CD4-positive, alpha-beta memory T cell (primary cell): ENCODE measurements at regions of chr1 and their contacts with region 1.

Region 1: DNA sequence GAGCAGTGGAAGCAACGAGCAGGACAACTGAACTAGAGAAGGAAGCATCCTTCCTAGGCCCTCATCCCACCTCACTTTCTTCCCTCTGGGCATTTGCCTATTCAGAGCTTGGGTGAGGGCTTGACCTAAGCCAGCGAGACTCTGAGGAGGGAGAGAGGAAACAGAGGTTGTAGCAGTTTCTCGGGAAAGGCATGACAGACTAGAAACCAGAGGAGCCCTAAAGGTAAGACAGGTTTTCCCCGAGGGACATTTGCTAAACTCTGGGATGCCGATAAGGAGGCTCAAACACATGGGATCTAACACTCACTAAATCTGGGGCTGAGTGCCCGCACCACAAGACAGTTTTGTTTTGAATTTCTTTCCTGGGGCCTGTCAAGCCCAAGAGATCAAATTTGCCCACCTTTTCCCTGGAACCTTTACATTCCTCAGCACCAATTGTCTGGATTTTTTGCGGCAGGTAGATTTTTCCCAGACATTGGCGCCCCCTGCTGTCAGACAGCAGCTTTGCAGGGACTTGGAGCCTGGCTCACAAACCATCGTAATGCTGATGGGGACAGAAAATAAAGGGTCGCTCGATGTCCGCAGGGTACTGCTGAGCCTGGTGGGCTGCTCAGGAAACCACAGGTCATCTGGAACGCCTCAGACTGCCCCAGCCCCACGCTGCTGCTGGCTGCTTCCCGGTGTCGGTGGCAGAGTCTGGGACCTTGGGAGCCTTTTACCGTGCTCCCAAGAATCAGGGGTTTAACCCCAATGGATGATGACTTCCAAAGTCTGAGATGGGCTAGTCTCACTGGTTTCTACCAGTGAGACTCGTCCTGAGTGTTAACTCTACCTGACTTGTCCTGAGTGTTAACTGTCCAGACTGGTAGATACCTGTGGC is 23.4 kb upstream of the TSPAN2 start:
- DNase-seq: peak in 4 of 5 donors; percentile 39 to 60 (median 46)
- H3K4me3 ChIP-seq: no peak overlapping the region
- H3K4me3 Mint-ChIP-seq: no peak overlapping the region
- H3K27ac ChIP-seq: no peak overlapping the region
- H3K27ac Mint-ChIP-seq: peak overlapping the region in 6 of 7 donors; percentile 12 to 69 (median 46)
- H3K4me1 ChIP-seq: peaks cover 18% of the 10 kb centered on the region
- H3K4me1 Mint-ChIP-seq: peaks cover 9 to 25% (median 18%) of the 10 kb centered on the region in 4 donors
- H3K27me3 ChIP-seq: no peaks in the 10 kb centered on the region
- H3K27me3 Mint-ChIP-seq: no peaks in the 10 kb centered on the region

Region 2: DNA sequence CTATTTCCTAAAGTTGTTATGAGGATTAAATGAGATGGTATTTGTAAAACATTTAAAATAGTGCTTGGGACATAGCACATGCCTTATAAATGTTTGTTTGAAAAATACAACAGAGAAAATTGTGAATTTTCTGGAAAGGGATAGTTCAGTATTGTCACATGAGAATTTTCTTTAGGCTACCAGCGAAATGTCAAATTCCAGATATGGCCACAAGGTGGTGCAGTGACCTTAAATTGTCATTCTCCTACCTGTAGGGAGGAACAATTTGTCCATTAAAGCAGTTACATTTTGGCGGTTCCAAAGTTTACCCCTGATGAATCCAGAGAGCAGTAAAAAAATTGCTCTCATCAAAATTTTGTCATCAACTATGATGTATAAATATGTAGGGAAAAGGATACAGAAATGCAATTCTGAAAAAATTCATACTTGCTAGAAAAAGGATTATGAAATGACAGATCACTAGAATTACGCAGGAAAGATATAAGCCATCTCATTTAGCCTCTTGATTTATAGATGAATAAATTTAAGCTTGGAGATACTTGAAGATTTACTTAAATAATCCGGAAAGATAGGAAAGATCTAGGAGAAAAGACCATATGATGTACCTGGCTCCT is 133.4 kb before region 1 on chr1:
- CTCF ChIA-PET with region 1: interaction called, 176 read pairs
- POLR2A ChIA-PET with region 1: interaction called, 4 read pairs
- intact Hi-C with region 1: loop called (anchors 1 kb)
- DNase-seq: peak; percentile 57 to 67 (median 64)
- H3K4me3 ChIP-seq: no peak overlapping the region
- H3K4me3 Mint-ChIP-seq: no peak overlapping the region
- H3K27ac ChIP-seq: no peak overlapping the region
- H3K27ac Mint-ChIP-seq: no peak overlapping the region
- H3K4me1 ChIP-seq: no peaks in the 10 kb centered on the region
- H3K4me1 Mint-ChIP-seq: no peaks in the 10 kb centered on the region
- H3K27me3 ChIP-seq: no peaks in the 10 kb centered on the region
- H3K27me3 Mint-ChIP-seq: peaks cover 10 to 12% of the 10 kb centered on the region in 2 donors

Region 3: GRCh38 chr1:114986286-114986685 is 126.5 kb before region 1 on chr1:
- CTCF ChIA-PET with region 1: interaction called, 176 read pairs
- POLR2A ChIA-PET with region 1: interaction called, 4 read pairs
- intact Hi-C with region 1: no loop called
- DNase-seq: no peak
- H3K4me3 ChIP-seq: no peak overlapping the region
- H3K4me3 Mint-ChIP-seq: no peak overlapping the region
- H3K27ac ChIP-seq: no peak overlapping the region
- H3K27ac Mint-ChIP-seq: no peak overlapping the region
- H3K4me1 ChIP-seq: no peaks in the 10 kb centered on the region
- H3K4me1 Mint-ChIP-seq: no peaks in the 10 kb centered on the region
- H3K27me3 ChIP-seq: peaks cover 3% of the 10 kb centered on the region
- H3K27me3 Mint-ChIP-seq: peaks cover 5 to 8% of the 10 kb centered on the region in 2 donors

Region 4: GRCh38 chr1:114997510-114998289 is 115.0 kb before region 1 on chr1:
- CTCF ChIA-PET with region 1: interaction called, 11 read pairs
- POLR2A ChIA-PET with region 1: no interaction called
- intact Hi-C with region 1: no loop called
- DNase-seq: no peak
- H3K4me3 ChIP-seq: no peak overlapping the region
- H3K4me3 Mint-ChIP-seq: no peak overlapping the region
- H3K27ac ChIP-seq: no peak overlapping the region
- H3K27ac Mint-ChIP-seq: no peak overlapping the region
- H3K4me1 ChIP-seq: no peaks in the 10 kb centered on the region
- H3K4me1 Mint-ChIP-seq: no peaks in the 10 kb centered on the region
- H3K27me3 ChIP-seq: no peaks in the 10 kb centered on the region
- H3K27me3 Mint-ChIP-seq: peaks cover 0 to 11% of the 10 kb centered on the region in 2 donors

Region 5: GRCh38 chr1:115098979-115099692 is 13.6 kb before region 1 on chr1:
- CTCF ChIA-PET with region 1: interaction called, 19 read pairs
- POLR2A ChIA-PET with region 1: interaction called, 13 read pairs
- intact Hi-C with region 1: no loop called
- DNase-seq: peak; percentile 88 to 96 (median 94)
- H3K4me3 ChIP-seq: peak overlapping the region; percentile 38 to 58
- H3K4me3 Mint-ChIP-seq: peak overlapping the region; percentile 87 to 99 (median 95)
- H3K27ac ChIP-seq: peak overlapping the region; percentile 89
- H3K27ac Mint-ChIP-seq: peak overlapping the region; percentile 94 to 100 (median 100)
- H3K4me1 ChIP-seq: peaks cover 40% of the 10 kb centered on the region
- H3K4me1 Mint-ChIP-seq: peaks cover 45 to 64% (median 53%) of the 10 kb centered on the region in 4 donors
- H3K27me3 ChIP-seq: no peaks in the 10 kb centered on the region
- H3K27me3 Mint-ChIP-seq: no peaks in the 10 kb centered on the region